ENCODE measurements at regions of chr7 and their contacts with region 1.

Region 1: DNA sequence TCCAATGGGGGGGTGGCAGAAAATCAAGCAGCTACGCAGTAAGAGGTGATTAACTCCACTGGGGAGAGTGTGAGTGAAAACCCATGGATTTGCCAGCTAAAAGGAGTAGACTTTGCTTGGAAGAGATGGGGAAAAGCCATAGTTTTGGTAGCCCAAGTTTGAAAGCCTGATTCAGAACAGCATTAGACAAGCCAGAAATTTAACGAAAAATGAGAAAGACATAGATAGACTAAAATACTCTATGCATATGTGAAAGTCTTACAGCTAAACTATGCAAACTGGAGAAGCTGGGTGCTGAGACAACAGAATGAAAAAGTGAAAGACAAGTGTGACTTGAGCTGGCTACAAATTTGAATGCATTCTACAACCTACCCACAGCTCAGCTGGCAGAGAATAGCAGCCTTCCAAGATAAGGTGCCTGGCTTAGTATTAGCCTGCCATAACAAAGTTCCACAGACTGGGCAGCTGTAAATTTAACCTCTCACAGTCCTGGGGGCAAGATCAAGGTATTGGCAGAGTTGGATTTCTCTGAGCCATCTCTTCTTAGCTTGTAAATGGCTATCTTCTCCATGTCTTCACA is 156.6 kb downstream of the CDC14C start:
- DNase-seq: no peak
- ATAC-seq: no peak
- H3K4me3 ChIP-seq: no peak overlapping the region
- H3K27ac ChIP-seq: no peak overlapping the region
- H3K4me1 ChIP-seq: no peaks in the 10 kb centered on the region
- H3K27me3 ChIP-seq: no peaks in the 10 kb centered on the region
- CTCF ChIP-seq: no peak

Region 2: DNA sequence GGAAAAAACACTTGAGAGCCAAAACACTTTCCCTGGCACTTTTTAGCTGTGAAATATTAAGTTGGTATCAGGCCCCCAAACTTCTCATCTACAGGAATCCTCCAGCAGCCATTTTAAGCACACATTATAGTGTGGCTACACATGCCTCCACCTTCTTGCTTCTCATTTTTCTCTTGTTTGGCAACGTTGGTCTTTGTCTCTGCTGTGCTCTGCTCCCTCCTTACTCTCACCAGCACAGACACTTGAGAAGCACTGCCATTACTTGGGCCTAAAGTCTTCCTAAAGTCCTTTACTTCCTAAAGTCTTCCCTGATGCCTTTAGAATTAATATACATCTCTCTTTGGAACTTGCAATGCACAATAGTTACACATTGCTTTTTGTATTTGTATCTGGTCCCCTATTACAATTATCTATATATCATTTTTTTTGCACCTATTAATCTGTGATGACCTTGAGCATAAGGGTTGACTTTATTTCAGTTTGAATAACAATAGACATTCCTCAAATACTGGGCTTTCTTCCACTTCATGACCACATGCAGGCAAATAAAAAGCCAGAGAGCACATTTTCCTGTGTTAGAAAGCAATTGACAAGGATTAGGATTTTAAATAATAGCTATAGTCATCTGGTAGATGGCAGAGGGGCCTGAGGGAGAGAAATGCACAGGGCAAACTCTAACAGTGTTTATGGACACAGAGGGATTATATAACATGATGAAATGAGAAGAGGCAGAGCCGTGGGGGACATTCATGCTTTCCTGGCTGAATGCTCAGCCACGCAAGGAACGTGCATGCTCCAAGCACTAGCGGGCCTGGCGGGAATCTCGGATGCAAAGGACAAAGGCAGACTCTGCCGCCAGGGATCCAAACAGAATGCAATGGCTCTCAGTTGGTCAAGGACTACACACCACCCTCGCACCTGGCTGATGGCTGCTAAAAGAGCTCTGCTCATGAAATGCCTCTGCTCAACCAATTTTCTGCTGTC is 57.3 kb before region 1 on chr7:
- CTCF ChIA-PET with region 1: no interaction called
- POLR2A ChIA-PET with region 1: no interaction called
- in situ Hi-C with region 1: no loop called
- intact Hi-C with region 1: loop called (anchors 10 kb)
- DNase-seq: no peak
- ATAC-seq: no peak
- H3K4me3 ChIP-seq: no peak overlapping the region
- H3K27ac ChIP-seq: no peak overlapping the region
- H3K4me1 ChIP-seq: no peaks in the 10 kb centered on the region
- H3K27me3 ChIP-seq: no peaks in the 10 kb centered on the region
- CTCF ChIP-seq: no peak

Region 3: DNA sequence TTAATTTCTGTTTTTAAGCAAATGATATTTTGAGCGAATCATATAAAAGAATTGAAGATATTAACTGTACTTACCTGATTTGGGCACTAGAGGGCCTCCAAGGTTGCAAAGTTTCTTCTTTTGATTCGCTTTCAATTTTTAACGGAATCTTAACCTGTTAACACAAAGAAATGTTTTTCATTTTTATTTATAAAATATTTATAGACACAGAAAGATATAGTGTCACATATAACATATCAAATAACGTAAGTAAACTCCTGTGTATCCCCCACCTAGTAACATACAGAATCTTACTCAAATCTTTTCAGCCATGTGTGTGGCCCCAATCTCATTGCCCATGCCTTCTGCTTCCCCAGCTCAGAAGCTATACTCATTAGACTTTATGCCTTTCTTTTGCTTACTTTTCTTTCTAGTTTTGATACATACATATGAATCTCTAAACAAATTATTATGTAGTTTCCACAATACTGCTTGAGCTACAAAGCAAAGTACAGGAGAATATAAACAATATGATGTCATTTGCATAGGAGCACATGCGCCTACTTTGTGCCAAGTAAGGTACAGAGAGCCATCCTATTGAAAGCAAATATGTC is 1061.5 kb after region 1 on chr7:
- CTCF ChIA-PET with region 1: no interaction called
- POLR2A ChIA-PET with region 1: no interaction called
- in situ Hi-C with region 1: no loop called
- intact Hi-C with region 1: no loop called
- DNase-seq: no peak
- ATAC-seq: no peak; the same call in 1 of the 2 replicates
- H3K4me3 ChIP-seq: no peak overlapping the region
- H3K27ac ChIP-seq: no peak overlapping the region
- H3K4me1 ChIP-seq: no peaks in the 10 kb centered on the region
- H3K27me3 ChIP-seq: 0 out of 2 replicates have a peak, but pooled peaks cover 2% of the 10 kb centered on the region
- CTCF ChIP-seq: peak; percentile 82; the same call in 1 of the 2 replicates

Region 4: DNA sequence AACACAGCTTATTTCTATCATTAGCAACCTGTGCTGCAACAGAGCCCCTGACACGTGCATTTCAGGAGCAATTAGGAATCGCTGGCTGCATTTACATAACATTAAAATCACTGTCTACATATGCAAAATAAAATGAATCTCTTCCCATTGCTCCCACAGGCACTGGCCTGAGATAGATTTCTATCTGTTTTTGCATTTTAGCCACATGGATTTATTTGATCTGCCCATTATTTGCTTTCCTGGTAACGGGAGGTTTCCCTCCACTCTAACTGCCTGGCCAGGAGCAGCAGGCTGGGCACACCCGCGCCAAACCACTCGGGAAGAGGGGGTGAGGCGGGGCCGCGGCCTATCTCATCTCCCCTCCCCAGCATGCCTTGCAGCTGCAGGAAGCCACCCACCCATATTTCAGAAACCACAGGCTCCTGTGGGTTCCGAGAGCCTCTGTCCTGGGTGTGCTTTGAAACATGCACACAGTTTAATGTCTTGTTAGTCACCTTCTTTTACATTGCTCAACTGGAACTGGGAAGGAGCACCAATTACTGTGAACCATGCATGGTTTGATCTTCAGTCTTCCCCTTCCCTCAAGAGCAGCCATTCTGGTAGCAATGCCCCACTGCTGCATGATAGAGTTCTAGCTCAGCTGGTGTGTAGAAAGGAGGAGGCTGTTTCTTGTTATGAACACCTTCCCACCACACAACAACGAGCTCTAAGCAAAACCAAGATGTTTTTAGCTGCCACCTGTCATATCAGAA is 1185.8 kb after region 1 on chr7:
- CTCF ChIA-PET with region 1: no interaction called
- POLR2A ChIA-PET with region 1: no interaction called
- in situ Hi-C with region 1: no loop called
- intact Hi-C with region 1: no loop called
- DNase-seq: no peak
- ATAC-seq: no peak
- H3K4me3 ChIP-seq: no peak overlapping the region
- H3K27ac ChIP-seq: no peak overlapping the region
- H3K4me1 ChIP-seq: no peaks in the 10 kb centered on the region
- H3K27me3 ChIP-seq: peaks cover 2% of the 10 kb centered on the region; the same call in 1 of the 2 replicates
- CTCF ChIP-seq: no peak

Measured in Panc1 (cell line).